ENCODE measurements at regions of chr12 and their contacts with region 1.

Region 1: DNA sequence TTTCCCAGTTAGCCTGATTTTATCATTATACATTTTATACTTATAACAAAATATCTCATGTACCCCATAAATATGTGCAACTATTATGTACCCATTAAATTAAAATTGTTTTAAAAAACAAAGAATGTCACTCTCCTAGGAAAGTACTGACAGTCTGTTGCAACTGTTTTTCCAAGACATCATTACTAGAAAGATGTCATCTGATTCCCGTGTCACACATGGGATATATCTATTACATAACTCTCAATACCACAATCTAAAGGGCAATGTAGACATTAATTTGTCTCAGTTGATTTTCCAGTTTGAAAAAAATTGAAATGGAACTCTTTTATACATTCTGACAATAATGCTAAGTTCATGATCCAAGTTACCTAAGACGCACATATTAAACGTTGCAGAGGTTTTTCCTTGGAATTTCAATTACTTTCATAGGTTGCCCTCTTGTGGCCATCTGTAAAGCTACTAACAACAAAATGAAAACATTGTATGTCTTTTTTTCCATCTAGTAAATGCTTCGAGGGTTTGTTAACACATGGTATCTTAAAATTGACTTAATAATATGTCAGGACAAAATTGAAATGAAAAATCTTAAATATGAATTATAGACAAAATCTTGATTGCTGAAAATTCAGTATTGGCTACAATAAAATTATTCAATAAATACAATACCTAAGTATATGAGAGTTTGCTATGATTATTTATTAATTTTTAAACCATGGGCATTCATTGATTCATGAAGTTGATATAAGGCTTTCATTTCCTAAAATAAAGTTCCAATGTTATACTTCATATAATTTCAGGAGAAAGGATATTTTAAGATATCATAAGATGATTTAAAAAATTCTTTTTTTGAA is 131.6 kb downstream of the PPFIA2 start:
- DNase-seq: peak; percentile 52
- ATAC-seq: peak; percentile 50
- H3K4me3 ChIP-seq: no peak overlapping the region
- H3K27ac ChIP-seq: no peak overlapping the region
- H3K4me1 ChIP-seq: no peaks in the 10 kb centered on the region
- H3K27me3 ChIP-seq: no peaks in the 10 kb centered on the region
- CTCF ChIP-seq: peak; percentile 46 to 75 (median 74)
- POLR2A ChIP-seq: no peak
- RAD21 ChIP-seq: peak; percentile 80

Region 2: GRCh38 chr12:81268664-81268926 is 359.0 kb before region 1 on chr12:
- CTCF ChIA-PET with region 1: no interaction called
- POLR2A ChIA-PET with region 1: no interaction called
- RAD21 ChIA-PET with region 1: no interaction called
- intact Hi-C with region 1: loop called (anchors 1 kb)
- DNase-seq: peak; percentile 13
- ATAC-seq: peak; percentile 86
- H3K4me3 ChIP-seq: no peak overlapping the region
- H3K27ac ChIP-seq: no peak overlapping the region
- H3K4me1 ChIP-seq: no peaks in the 10 kb centered on the region
- H3K27me3 ChIP-seq: no peaks in the 10 kb centered on the region
- CTCF ChIP-seq: peak; percentile 19 to 63 (median 40); a peak in 4 of 6 replicates
- POLR2A ChIP-seq: no peak
- RAD21 ChIP-seq: peak; percentile 49

Region 3: DNA sequence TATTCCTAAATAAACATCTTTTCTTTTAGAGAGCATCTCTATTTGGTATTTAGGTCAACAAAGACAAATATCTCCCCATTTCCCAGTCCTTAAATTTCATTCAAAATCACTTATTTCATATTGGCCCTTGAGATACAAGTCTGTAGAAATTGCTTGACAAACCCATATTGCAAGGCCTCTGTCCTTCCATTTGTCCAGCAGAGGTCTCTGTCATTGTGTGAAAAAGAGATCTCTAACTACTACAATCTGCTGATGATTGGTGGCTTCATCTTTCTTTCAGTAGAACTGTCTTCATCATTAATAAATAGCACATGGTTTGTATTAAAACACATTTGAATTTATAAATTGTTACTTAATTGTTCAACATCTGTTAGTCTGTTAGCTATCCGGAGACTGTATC is 297.1 kb before region 1 on chr12:
- CTCF ChIA-PET with region 1: no interaction called
- POLR2A ChIA-PET with region 1: no interaction called
- RAD21 ChIA-PET with region 1: no interaction called
- intact Hi-C with region 1: loop called (anchors 2 kb)
- DNase-seq: no peak
- ATAC-seq: no peak
- H3K4me3 ChIP-seq: no peak overlapping the region
- H3K27ac ChIP-seq: no peak overlapping the region
- H3K4me1 ChIP-seq: no peaks in the 10 kb centered on the region
- H3K27me3 ChIP-seq: no peaks in the 10 kb centered on the region
- CTCF ChIP-seq: peak; percentile 13 to 35 (median 21); a peak in 2 of 6 replicates
- POLR2A ChIP-seq: no peak
- RAD21 ChIP-seq: no peak

Region 4: DNA sequence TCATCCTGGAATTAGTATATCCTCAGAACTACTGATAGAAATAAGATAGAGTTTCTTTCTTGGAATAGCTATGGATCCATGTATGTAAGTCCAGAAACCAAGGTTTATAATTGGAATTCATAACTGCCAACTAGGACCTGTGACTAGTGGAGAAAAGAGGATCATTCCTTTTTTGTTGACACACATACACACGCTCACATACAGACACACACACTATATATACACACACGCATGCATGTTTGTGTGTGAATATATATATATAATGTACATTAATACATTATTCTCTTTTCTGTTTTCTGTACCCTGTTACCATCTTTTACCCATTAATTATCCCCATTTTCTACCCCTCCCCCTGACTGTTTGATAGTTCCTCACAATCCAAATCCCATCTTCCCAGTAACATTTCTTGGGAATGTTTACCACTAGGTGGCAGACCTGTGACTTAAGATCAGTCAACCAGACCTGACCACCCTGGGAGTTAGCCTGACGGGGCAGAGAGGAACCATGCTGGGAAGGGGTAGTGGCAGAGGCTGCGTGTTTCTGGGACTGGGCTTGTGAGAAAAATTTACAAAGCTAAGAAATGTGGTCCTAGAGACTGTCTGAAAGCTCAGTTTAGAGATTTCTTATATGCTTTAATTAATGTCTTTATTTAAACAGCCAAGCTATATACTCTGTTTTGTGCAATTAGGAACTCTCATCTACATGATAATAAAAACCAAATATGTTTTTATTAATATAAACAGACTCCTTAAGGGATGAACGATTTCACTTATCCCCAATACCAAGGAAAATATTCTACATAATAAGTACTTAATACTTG is 176.4 kb before region 1 on chr12:
- CTCF ChIA-PET with region 1: interaction called, 4 read pairs
- POLR2A ChIA-PET with region 1: no interaction called
- RAD21 ChIA-PET with region 1: no interaction called
- intact Hi-C with region 1: loop called (anchors 1 kb)
- DNase-seq: peak; percentile 76
- ATAC-seq: peak; percentile 99
- H3K4me3 ChIP-seq: no peak overlapping the region
- H3K27ac ChIP-seq: no peak overlapping the region
- H3K4me1 ChIP-seq: no peaks in the 10 kb centered on the region
- H3K27me3 ChIP-seq: no peaks in the 10 kb centered on the region
- CTCF ChIP-seq: peak; percentile 62 to 70 (median 65); a peak in 5 of 6 replicates
- POLR2A ChIP-seq: no peak
- RAD21 ChIP-seq: peak; percentile 62